Mammary epithelial cell (primary cell): ENCODE measurements at regions of chr20 and their contacts with region 1.

Region 1: DNA sequence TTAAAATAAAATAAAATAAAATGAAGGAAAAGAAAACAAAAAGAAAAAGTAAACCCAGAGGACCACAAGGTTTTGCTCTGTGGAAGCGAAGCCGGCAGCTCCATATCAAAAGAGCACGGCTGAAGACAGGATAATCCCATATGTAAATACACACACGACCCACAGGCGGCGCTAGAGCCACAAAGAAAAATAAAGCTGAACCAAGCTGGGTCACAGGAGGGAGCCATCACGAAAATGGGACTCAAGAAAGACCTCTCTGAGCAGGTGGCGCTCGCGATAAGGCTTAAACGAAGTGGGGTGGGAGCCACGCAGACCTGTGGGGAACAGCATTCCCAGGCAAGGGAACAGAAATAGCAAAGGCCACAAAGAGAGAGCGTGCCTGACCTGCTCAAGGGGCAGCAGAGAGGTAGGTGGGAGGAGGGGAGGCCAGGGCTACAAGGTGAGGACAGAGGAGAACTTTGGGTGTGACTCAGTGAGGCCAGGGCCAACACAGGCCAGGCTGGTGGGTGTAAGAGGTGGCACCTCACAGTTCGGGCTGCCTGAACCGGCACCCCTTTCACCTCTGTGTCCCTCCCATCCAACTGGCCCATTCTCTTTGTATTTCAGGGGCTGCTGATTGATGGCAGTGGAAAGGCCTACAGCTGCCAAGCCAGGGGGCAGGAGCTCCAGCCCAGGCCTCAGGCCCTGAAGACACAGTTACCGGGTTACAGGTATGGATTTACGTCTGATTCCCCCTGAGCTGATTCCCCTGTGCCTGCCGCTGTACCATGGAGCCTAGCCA is 26.0 kb downstream of the PTGIS start:
- DNase-seq: peak; percentile 38
- H3K4me3 ChIP-seq: no peak overlapping the region
- H3K27ac ChIP-seq: no peak overlapping the region
- H3K4me1 ChIP-seq: no peaks in the 10 kb centered on the region
- H3K27me3 ChIP-seq: no peaks in the 10 kb centered on the region
- CTCF ChIP-seq: peak; percentile 80 to 82

Region 2: GRCh38 chr20:49846206-49846807 is 304.4 kb after region 1 on chr20:
- CTCF ChIA-PET with region 1: no interaction called
- dilution Hi-C with region 1: no loop called
- in situ Hi-C with region 1: no loop called
- intact Hi-C with region 1: loop called (anchors 2 kb)
- DNase-seq: peak; percentile 48
- H3K4me3 ChIP-seq: no peak overlapping the region
- H3K27ac ChIP-seq: no peak overlapping the region
- H3K4me1 ChIP-seq: peaks cover 15% of the 10 kb centered on the region
- H3K27me3 ChIP-seq: no peaks in the 10 kb centered on the region
- CTCF ChIP-seq: peak; percentile 46 to 65

Region 3: DNA sequence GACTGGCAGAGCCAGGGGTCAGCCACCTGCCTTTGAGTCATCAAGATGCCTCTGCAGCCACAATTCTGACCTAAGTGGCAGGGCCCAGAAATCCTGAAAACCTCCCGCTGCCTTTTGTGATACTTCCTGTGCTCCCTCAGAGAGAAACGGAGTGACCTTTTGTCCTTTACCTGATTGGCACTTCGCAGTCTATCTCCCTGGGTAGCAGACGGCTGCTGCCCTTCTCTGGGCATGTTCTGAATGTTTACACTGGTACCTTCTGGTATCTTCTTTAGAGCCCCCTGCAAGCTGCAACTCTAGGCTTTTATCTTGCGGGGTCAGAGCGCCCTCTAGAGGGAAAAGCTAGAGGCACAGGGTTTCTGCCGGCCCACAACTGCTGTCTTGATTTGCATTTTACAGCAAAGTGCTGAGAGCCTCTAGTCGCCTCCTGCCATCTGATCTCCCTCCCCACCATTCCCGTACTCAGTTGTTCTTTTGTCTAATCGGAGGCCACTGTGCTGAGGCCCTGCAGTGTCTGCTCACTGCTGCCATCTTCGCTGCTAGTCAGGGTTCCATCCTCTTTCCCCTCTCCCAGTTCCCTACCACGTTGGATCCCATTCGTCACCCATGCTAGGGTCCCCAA is 346.5 kb after region 1 on chr20:
- CTCF ChIA-PET with region 1: no interaction called
- dilution Hi-C with region 1: no loop called
- in situ Hi-C with region 1: no loop called
- intact Hi-C with region 1: loop called (anchors 5 kb)
- DNase-seq: peak; percentile 19
- H3K4me3 ChIP-seq: no peak overlapping the region
- H3K27ac ChIP-seq: no peak overlapping the region
- H3K4me1 ChIP-seq: no peaks in the 10 kb centered on the region
- H3K27me3 ChIP-seq: no peaks in the 10 kb centered on the region
- CTCF ChIP-seq: peak; percentile 73 to 79

Region 4: DNA sequence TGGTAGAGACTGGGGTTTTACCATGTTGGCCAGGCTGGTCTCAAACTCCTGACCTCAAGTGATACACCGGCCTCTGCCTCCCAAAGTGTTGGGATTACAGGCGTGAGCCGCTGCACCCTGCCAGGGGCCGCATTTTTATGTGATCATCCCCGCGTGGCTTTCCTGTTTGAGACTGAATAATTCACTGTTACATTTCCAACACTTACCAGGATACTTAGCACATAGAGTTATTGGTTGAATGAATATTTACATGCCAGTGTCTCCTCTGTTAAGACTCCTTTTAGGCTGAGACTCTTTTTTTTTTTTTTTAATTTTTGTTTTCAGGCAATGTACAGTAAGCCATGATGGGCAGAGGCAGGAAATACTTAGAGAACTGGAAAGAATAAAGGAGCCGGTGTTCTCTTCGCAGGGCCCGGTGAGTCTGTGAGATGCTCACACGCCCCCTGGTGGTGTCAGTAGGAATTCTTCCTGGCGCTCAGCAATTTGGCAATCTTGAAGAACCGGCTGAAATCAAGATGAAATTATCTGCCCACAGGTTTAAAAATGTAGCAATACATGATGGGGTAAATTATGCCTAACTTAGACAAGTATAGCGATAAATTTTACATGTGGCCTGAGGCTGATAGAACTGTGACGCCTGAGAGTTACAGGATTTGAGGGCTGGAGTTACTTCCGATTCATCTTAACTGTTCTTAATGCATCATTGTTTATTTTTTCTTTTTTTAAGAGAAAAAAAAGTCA is 386.6 kb after region 1 on chr20:
- CTCF ChIA-PET with region 1: no interaction called
- dilution Hi-C with region 1: no loop called
- in situ Hi-C with region 1: no loop called
- intact Hi-C with region 1: loop called (anchors 5 kb)
- DNase-seq: peak; percentile 79
- H3K4me3 ChIP-seq: no peak overlapping the region
- H3K27ac ChIP-seq: no peak overlapping the region
- H3K4me1 ChIP-seq: peaks cover 6% of the 10 kb centered on the region
- H3K27me3 ChIP-seq: no peaks in the 10 kb centered on the region
- CTCF ChIP-seq: peak; percentile 90

Region 5: DNA sequence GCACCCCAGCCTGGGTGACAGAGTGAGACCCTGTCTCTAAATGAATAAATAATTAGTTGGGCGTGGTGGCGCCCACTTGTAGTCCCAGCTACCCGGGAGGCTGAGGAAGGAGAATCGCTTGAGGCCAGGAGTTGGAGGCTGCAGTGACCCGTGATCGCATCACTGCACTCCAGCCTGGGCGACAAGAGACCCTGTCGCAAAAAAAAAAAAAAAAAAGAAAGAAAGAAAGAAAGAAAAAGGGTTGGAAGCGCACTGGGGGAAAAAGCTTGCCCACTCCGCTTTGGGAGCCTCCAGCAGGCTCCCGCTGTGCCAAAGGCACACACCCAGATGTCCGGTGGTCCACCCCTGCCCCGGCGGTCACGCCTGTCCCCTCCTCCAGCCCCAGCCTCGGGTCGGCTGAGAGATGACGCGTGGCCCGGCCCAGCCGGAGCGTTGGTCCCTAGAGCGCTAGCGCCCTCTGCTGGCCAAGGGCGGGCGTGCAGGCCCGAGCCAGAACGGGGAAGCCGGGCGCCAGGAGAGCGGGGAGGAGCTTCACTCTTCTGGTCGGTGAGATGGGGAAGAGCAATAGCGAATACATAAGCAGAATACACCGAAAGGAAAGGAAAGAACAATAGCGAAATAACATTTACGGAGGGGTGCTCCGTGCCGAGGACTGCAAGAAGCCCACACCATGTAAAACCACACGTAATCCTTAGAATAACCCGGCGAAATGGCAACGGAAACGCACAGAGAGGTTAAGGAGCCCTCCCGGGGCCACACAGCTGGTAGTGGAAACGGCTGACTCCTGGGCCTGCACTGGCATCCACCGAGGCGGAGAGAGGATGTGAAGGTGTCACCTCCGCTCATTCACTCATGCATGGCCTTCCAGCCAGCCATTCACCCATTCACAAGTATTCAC is 529.3 kb after region 1 on chr20:
- CTCF ChIA-PET with region 1: no interaction called
- dilution Hi-C with region 1: no loop called
- in situ Hi-C with region 1: no loop called
- intact Hi-C with region 1: loop called (anchors 5 kb)
- DNase-seq: peak; percentile 68
- H3K4me3 ChIP-seq: peak overlapping the region; percentile 23 to 46 (median 42)
- H3K27ac ChIP-seq: no peak overlapping the region
- H3K4me1 ChIP-seq: no peaks in the 10 kb centered on the region
- H3K27me3 ChIP-seq: no peaks in the 10 kb centered on the region
- CTCF ChIP-seq: peak; percentile 95 to 98